Prostate gland (tissue), 2 donors: ENCODE measurements at regions of chr14 and their contacts with region 1.

Region 1: DNA sequence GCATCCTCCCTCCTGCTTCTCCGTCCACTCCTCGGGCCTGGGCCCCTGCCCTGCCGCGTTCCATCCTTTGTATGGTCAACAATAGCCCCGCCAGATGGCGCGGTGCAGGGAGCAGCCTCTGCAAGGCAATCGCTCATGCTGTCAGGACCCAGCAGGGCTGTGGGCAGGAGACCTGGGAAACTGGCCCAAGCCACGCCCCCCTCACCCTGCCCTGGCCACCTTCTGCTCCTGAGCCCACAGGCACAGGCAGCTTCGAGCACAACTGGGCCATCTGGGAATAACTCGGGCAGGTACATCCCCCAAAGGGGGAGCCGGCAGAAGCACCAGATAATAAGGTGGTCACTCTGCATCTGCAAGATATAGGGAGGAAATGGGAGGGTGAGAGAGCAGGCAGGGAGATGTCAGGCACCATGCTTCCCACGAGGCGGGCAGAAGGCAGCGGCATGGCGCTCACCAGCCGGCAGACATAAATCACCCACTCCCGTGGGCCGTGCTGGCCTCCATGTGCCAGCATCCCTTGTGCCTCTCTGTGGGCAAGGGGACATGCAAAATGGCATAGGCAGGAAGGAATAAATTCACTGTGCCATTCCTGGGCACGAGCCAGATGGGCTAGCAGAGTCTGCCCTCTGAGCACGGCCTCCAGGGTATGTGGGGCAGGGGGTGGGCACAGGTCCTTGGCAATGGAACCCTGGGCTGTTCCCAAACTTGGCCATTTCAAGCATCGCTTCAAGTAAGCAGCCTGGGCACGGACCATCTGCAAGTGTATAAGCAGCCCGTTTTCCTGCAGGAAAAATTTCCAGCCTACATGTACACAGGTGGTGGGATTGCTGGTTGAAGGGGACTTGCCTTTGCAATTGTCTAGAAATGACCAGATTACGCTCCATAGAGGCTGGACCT is 40.5 kb downstream of the CCDC85C start:
- DNase-seq: peak; percentile 79
- H3K4me3 ChIP-seq: no peak overlapping the region
- H3K27ac ChIP-seq: peak overlapping the region; percentile 60 to 84
- H3K4me1 ChIP-seq: peaks cover 62% of the 10 kb centered on the region
- H3K27me3 ChIP-seq: no peaks in the 10 kb centered on the region
- CTCF ChIP-seq: peak in 3 of 4 experiments; percentile 27 to 70 (median 54)
- POLR2A ChIP-seq: no peak

Region 2: DNA sequence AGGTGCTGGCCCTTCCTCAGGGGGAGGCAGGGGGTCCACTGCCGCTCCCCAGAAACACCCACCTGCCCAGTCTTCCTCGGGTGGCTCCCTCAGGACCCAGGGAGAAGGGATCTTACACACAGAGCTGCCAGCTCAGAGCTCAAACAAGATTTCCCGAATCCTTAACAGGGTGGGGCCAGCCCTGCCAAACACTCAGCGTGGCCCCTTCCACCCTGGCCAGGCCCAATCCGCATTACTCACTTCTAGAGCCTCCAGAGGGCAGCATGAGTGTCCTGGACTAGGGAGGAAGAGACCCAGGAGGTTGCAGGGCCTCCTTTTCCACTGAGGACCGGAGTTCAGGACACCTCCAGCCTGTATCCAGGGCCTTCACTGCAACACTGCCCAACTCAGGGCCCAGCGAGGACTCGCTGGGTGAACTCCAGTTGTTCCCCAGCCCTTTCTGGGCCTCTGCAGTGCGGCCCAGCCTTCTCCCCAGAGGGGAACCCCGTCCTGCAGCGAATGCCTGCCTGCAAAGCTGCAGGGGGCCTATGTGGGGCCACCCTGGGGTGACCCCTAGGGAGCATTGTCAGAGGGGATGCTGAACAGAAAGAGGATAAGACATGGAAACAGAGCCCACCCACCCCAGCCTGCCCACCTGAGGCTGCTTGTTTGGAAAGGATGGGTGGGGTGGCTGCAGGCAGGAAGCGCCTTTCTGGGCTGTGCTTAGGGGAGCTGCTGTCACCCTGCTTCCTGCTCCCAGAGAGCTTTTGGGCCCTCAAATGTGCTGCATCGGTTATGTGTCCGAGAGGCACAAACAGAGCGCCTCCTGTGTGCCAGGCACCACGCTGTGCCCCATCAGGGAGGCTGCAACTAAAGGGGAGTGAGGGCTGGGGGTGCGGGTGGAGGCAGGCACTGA is 38.4 kb before region 1 on chr14:
- intact Hi-C with region 1: loop called (anchors 5 kb)
- DNase-seq: peak; percentile 34
- H3K4me3 ChIP-seq: no peak overlapping the region
- H3K27ac ChIP-seq: peak overlapping the region; percentile 21 to 62
- H3K4me1 ChIP-seq: peaks cover 20% of the 10 kb centered on the region
- H3K27me3 ChIP-seq: no peaks in the 10 kb centered on the region
- CTCF ChIP-seq: peak in 1 of 4 experiments; percentile 38
- POLR2A ChIP-seq: no peak

Region 3: GRCh38 chr14:99682809-99683618 is 119.5 kb after region 1 on chr14:
- intact Hi-C with region 1: no loop called
- DNase-seq: peak; percentile 72
- H3K4me3 ChIP-seq: peak overlapping the region; percentile 43 to 78
- H3K27ac ChIP-seq: peak overlapping the region; percentile 44 to 68
- H3K4me1 ChIP-seq: peaks cover 7% of the 10 kb centered on the region
- H3K27me3 ChIP-seq: no peaks in the 10 kb centered on the region
- CTCF ChIP-seq: peak; percentile 80 to 89 (median 87)
- POLR2A ChIP-seq: no peak

Region 4: DNA sequence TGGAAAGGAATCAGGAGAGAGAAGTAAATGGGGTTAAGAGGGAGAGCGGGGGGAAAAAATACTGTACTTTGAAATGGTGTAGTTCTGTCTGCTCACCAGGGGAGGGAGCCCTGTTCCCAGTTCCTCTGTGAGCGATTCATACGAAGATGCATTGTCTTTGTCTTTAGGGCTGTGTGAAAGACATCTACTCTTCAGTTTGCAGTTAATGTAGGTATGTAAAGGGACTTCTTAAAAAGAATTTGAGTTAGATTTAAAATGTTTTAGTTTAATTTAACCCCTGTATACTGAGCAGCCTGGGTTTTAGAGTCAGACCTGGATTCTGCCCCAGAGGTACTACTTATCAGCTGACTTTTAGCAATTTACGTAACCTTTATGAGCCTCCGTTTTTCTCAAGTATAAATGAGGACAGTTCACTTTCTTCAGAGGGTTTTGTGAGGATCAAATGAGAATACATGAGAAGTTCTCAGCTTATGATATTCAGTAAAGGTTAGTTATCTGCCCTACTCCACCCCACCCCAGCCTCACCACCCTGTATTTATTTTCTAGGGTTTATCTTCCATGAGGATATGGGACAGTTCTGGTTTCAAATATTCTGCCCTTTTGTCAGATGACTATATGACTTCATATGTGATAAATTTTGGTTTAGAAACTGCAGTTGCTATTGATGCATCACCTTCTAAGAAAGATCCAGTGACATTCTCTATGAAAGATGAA is 419.2 kb after region 1 on chr14:
- intact Hi-C with region 1: no loop called
- DNase-seq: peak; percentile 51
- H3K4me3 ChIP-seq: no peak overlapping the region
- H3K27ac ChIP-seq: no peak overlapping the region
- H3K4me1 ChIP-seq: peaks cover 3% of the 10 kb centered on the region
- H3K27me3 ChIP-seq: no peaks in the 10 kb centered on the region
- CTCF ChIP-seq: peak; percentile 53 to 92 (median 82)
- POLR2A ChIP-seq: no peak